Astrocyte of the cerebellum (primary cell): ENCODE measurements at regions of chr13 and their contacts with region 1.

Region 1: GRCh38 chr13:110819203-110820014 is 95.5 kb downstream of the ANKRD10 start:
- DNase-seq: peak; percentile 24
- H3K4me3 ChIP-seq: no peak overlapping the region
- CTCF ChIP-seq: peak; percentile 96

Region 2: GRCh38 chr13:110615322-110616102 is 203.9 kb before region 1 on chr13 and contains the start of gene NAXD:
- in situ Hi-C with region 1: loop called (anchors 25 kb)
- DNase-seq: peak; percentile 85
- H3K4me3 ChIP-seq: peak within 1 kb of the TSS; percentile 76
- CTCF ChIP-seq: no peak